ENCODE measurements at regions of chr1 and their contacts with region 1.

Region 1: GRCh38 chr1:153677718-153678505 is 576 bp upstream of the NPR1 start:
- DNase-seq: peak; percentile 86
- H3K4me3 ChIP-seq: peak overlapping the region; percentile 34 to 44
- H3K27ac ChIP-seq: no peak overlapping the region
- H3K4me1 ChIP-seq: peaks cover 0 to 15% of the 10 kb centered on the region in 2 experiments; a peak in 1 of 4 replicates
- H3K27me3 ChIP-seq: peaks cover 30% of the 10 kb centered on the region
- CTCF ChIP-seq: peak; percentile 96
- EP300 ChIP-seq: no peak
- RAD21 ChIP-seq: peak; percentile 90

Region 2: DNA sequence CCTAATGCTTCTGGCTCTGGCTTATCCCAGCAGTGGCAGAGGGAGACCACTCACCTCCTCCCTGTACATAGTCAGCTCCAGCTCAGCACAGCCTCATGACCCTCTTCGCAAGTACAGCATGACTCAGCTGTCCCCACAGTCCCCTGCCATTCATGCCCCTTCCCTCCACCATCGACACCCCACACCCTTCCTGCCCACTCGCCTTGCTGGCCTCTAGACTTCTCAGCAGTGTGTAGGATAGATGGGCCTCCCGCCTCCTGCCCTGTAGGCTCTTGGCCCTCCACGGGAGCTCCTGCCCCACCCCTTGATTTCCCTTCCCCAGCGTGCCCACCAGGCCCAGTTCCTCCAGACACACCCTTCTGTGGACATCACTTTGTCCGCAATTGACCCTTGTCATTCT is 10.4 kb after region 1 on chr1:
- CTCF ChIA-PET with region 1: interaction called, 14 read pairs
- POLR2A ChIA-PET with region 1: no interaction called
- DNase-seq: no peak
- H3K4me3 ChIP-seq: no peak overlapping the region
- H3K27ac ChIP-seq: no peak overlapping the region
- H3K4me1 ChIP-seq: no peaks in the 10 kb centered on the region; a peak in 1 of 4 replicates
- H3K27me3 ChIP-seq: no peaks in the 10 kb centered on the region; the same call in 1 of the 2 replicates
- CTCF ChIP-seq: no peak
- EP300 ChIP-seq: no peak
- RAD21 ChIP-seq: no peak

Region 3: GRCh38 chr1:153705485-153705884 is 27.6 kb after region 1 on chr1:
- CTCF ChIA-PET with region 1: interaction called, 13 read pairs
- POLR2A ChIA-PET with region 1: no interaction called
- DNase-seq: no peak
- H3K4me3 ChIP-seq: no peak overlapping the region
- H3K27ac ChIP-seq: no peak overlapping the region
- H3K4me1 ChIP-seq: no peaks in the 10 kb centered on the region
- H3K27me3 ChIP-seq: no peaks in the 10 kb centered on the region
- CTCF ChIP-seq: no peak
- EP300 ChIP-seq: no peak
- RAD21 ChIP-seq: no peak

Region 4: GRCh38 chr1:153742411-153743142 is 64.7 kb after region 1 on chr1:
- CTCF ChIA-PET with region 1: interaction called, 156 read pairs
- POLR2A ChIA-PET with region 1: no interaction called
- DNase-seq: no peak
- H3K4me3 ChIP-seq: no peak overlapping the region
- H3K27ac ChIP-seq: no peak overlapping the region
- H3K4me1 ChIP-seq: no peaks in the 10 kb centered on the region
- H3K27me3 ChIP-seq: no peaks in the 10 kb centered on the region
- CTCF ChIP-seq: no peak
- EP300 ChIP-seq: no peak
- RAD21 ChIP-seq: no peak

Region 5: DNA sequence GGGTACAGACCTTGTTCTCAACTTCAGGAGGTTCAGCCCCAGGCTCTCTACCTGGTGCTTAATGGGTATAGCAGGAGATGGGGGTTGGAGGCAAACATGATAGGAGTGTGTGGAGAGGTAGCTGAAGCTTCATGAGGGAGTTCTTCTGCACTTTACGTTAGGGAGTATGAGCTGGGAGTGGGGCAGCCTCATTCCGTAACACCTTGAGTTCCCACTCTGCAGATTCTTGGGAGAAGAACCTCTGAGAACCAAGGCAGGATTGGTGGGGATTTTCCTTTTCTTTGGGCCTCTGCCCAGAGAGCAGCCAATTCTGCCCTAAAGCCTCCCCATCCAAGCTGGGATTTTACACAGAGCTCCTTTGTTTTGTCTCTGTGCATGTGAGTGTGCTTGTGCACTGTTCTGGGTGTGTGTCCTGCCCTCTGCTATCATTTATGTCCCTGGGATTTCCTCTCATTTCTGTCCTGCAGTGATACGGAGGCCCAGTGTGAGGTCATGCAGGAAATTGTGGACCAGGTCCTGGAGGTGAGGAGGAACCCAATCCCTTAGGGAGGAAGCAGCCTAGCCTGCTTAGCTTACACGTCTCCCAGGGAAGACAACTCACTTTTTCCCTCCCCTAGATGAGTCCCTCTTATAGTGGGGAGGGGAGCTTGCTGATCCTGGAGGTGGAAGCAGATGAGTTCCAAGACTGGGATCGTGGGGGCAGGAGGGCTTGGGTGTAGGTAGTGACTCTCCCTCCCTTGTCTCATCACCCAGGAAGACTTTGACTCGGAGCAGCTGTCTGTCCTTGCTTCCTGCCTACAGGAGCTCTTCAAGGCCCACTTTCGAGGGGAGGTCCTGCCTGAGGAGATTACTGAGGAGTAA is 85.7 kb after region 1 on chr1:
- CTCF ChIA-PET with region 1: interaction called, 28 read pairs
- POLR2A ChIA-PET with region 1: interaction called, 3 read pairs
- DNase-seq: no peak
- H3K4me3 ChIP-seq: no peak overlapping the region
- H3K27ac ChIP-seq: no peak overlapping the region
- H3K4me1 ChIP-seq: no peaks in the 10 kb centered on the region
- H3K27me3 ChIP-seq: no peaks in the 10 kb centered on the region
- CTCF ChIP-seq: no peak
- EP300 ChIP-seq: no peak
- RAD21 ChIP-seq: no peak

Region 6: DNA sequence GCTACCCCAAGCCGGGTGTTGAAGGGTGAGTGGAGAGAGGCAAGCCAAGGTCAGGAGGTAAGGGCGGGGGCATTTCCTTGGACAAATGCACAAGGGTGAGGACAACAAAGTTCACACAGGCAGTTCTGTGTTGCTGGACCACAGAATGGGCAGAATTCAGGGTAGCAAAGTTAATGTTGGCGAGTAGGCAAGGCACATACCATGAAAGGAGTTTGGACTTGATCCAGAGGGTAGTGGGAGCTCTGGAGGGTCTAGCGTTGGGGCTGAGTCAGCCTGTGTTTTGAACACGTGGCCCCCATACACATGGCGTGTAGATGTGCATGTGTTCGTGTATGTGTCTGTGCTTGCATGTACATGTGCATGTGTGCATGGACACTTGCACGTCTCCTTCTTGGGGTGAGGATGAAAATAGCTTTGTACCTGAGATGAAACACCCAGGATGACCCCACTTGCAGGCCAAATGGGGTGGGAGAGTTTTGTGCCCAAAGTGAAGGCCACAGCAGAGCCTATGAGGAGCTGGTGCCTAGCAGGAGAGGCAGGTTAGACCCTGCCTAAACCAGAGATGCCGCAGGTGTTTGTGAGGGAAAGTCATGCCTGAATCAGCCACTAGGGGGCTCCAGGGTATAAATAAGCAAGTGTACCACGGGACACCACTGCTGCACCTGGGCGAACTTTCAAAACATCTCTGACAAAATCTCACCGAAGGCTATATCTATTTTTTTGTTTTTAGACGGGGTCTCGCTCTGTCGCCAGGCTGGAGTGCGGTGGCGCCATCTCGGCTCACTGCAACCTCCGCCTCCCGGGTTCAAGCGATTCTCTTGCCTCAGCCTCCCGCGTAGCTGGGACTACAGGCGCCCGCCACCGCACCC is 119.1 kb after region 1 on chr1:
- CTCF ChIA-PET with region 1: interaction called, 14 read pairs
- POLR2A ChIA-PET with region 1: no interaction called
- DNase-seq: peak; percentile 90
- H3K4me3 ChIP-seq: no peak overlapping the region; a peak in 1 of 4 replicates
- H3K27ac ChIP-seq: no peak overlapping the region
- H3K4me1 ChIP-seq: no peaks in the 10 kb centered on the region; a peak in 1 of 4 replicates
- H3K27me3 ChIP-seq: no peaks in the 10 kb centered on the region
- CTCF ChIP-seq: peak; percentile 85
- EP300 ChIP-seq: no peak
- RAD21 ChIP-seq: peak; percentile 84

Region 7: DNA sequence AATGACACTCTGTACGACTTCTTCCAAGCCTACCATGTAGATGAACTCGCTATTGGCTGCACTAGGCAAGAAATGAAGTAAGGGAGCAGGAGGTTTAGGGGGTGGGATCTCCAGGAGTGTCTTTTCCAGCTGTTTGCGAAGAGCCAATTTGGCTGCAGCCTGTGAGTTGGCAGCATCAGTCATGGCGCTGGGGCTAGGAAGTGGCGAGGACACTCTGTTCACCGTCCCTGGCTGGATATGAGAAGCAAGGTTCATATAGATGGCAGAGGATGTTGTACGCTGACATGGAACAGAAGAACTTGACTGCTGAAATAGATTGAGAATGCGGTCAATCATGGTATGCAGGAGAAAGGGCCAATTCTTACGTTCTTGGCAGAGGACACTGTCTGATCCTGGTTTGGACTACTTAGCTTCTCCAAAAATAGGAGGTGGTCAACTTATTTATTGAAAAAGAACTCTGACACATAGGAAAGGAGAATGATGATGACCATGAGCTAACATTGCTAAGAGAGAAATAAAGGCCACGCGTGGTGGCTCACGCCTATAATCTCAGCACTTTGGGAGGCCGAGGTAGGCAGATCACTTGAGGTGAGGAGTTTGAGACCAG is 138.5 kb after region 1 on chr1:
- CTCF ChIA-PET with region 1: no interaction called
- POLR2A ChIA-PET with region 1: no interaction called
- DNase-seq: no peak
- H3K4me3 ChIP-seq: no peak overlapping the region
- H3K27ac ChIP-seq: no peak overlapping the region
- H3K4me1 ChIP-seq: no peaks in the 10 kb centered on the region
- H3K27me3 ChIP-seq: no peaks in the 10 kb centered on the region
- CTCF ChIP-seq: no peak
- EP300 ChIP-seq: no peak
- RAD21 ChIP-seq: no peak